ENCODE measurements at regions of chr14 and their contacts with region 1.

Region 1: GRCh38 chr14:75307700-75308379 is 29.2 kb downstream of the FOS start:
- DNase-seq: peak; percentile 75 to 81 (median 75)
- H3K4me3 ChIP-seq: peak overlapping the region in 1 of 7 experiments; percentile 16
- H3K27ac ChIP-seq: no peak overlapping the region
- H3K4me1 ChIP-seq: peaks cover 0 to 15% (median 7%) of the 10 kb centered on the region in 4 experiments
- H3K27me3 ChIP-seq: no peaks in the 10 kb centered on the region

Region 2: DNA sequence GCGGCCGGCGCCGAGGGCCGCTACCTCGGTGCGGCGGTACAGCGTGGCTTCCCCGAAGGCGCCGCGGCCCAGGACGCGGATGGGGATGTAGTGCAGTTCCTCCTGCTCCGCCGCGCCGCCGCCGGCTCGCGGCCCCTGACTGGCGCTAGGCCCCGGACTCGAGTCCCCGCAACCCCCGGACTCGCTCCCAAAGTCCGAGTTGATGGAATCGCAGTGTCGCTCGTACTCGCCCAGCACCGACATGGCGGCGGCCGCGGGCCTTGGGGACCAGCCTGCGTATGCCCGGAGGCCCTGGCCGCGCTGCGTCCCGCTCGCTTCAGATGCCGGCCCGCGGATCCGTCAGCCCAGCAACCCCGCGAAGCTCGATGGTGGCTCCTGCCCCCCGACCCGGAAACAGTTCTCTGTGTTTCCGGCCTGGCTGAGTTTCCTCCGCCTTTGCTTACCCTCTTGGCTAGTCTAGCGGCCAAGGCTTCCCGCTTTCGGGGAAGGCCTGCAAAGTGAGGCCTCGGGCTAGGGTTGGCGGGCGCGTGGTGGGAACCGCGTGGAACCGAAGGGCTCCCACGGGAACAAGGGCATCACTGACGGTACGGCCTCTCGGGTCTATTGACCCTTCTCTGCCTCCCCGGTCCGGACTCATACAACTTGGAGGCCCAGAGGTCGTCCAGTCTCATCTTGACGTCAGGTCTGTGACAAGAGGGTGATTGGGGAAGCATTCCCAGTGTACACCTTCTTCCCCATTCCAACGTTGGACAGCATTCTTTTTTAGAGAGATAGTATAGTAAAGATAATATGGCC is 181.0 kb before region 1 on chr14 and contains the start of gene NEK9:
- CTCF ChIA-PET with region 1: interaction called, 210 read pairs
- POLR2A ChIA-PET with region 1: no interaction called
- DNase-seq: peak; percentile 88 to 89 (median 89)
- H3K4me3 ChIP-seq: peak within 1 kb of the TSS; percentile 34 to 94 (median 80)
- H3K27ac ChIP-seq: peak within 1 kb of the TSS; percentile 82 to 89
- H3K4me1 ChIP-seq: peaks cover 9 to 53% (median 35%) of the 10 kb centered on the region in 4 experiments
- H3K27me3 ChIP-seq: no peaks in the 10 kb centered on the region

Region 3: GRCh38 chr14:75293920-75294642 is 13.8 kb before region 1 on chr14:
- CTCF ChIA-PET with region 1: interaction called, 12 read pairs
- POLR2A ChIA-PET with region 1: no interaction called
- DNase-seq: peak; percentile 95 to 96 (median 95)
- H3K4me3 ChIP-seq: peak overlapping the region; percentile 49 to 88 (median 74)
- H3K27ac ChIP-seq: peak overlapping the region; percentile 97 to 99
- H3K4me1 ChIP-seq: peaks cover 10 to 51% (median 37%) of the 10 kb centered on the region in 4 experiments
- H3K27me3 ChIP-seq: no peaks in the 10 kb centered on the region

Region 4: DNA sequence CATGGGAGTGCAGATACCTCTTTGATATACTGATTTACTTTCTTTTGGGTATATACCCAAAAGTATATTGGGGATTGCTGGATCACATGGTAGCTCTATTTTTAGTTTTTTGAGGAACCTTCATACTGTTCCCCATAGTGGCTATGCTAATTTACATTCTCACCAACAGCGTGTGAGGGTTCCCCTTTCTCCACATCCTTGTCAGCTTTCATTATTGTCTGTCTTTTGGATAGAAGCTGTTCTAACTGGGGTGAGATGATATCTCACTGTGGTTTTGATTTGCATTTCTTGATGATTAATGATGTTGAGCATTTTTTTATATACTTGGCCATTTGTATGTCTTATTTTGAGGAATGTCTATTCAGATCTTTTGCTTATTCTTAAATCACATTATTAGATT is 75.9 kb after region 1 on chr14:
- CTCF ChIA-PET with region 1: no interaction called
- POLR2A ChIA-PET with region 1: no interaction called
- DNase-seq: peak in 2 of 3 donors; percentile 54 to 65
- H3K4me3 ChIP-seq: no peak overlapping the region
- H3K27ac ChIP-seq: no peak overlapping the region
- H3K4me1 ChIP-seq: peaks cover 0 to 7% (median 0%) of the 10 kb centered on the region in 4 experiments
- H3K27me3 ChIP-seq: no peaks in the 10 kb centered on the region

Region 5: DNA sequence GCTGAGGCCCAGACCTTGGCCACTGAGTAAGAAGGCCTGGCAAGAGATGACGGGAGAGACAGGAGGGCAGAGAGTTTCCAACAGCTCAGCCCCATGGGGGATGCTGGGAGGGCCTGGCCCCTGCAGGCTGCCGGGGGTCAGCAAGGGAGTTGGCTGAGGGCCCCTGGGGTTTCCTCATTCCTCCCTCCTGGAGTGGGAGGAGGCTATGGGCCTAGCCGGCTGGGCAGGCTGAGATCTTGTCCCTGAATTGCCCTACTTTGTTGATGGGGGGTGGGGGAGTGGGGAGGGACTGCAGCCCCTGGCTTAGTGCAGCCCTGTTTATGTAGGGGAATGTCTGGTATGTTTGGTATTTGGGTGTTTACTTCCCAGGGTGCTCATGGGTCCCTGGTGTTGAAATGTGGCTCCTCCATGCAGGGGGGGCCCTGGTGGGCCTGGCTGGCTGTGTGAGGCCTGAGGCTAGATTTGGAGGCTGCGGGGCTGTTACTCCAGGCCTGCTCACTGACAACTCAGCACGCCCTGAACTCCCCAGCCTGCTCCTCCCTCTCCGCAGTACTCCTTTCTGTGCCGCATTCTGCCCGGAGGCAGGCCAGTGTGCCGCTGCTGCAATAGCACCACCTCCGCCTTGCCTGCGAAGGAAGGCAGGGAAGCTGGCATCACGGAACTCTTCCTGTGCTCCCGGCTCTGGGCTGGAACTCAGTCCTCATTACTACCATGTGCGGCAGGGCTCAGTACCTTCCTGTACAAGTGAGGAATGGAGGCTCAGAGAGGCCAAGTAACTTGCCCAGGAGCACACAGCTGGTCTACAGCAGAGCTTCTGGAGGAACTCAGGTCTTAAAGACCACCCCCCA is 145.3 kb after region 1 on chr14:
- CTCF ChIA-PET with region 1: interaction called, 86 read pairs
- POLR2A ChIA-PET with region 1: no interaction called
- DNase-seq: no peak
- H3K4me3 ChIP-seq: no peak overlapping the region
- H3K27ac ChIP-seq: no peak overlapping the region
- H3K4me1 ChIP-seq: peaks cover 4 to 83% (median 55%) of the 10 kb centered on the region in 4 experiments
- H3K27me3 ChIP-seq: no peaks in the 10 kb centered on the region

Region 6: GRCh38 chr14:75487155-75487671 is 179.4 kb after region 1 on chr14:
- CTCF ChIA-PET with region 1: interaction called, 63 read pairs
- POLR2A ChIA-PET with region 1: interaction called, 3 read pairs
- DNase-seq: peak in 2 of 3 donors; percentile 27 to 39
- H3K4me3 ChIP-seq: no peak overlapping the region
- H3K27ac ChIP-seq: no peak overlapping the region
- H3K4me1 ChIP-seq: no peaks in the 10 kb centered on the region
- H3K27me3 ChIP-seq: no peaks in the 10 kb centered on the region

Region 7: DNA sequence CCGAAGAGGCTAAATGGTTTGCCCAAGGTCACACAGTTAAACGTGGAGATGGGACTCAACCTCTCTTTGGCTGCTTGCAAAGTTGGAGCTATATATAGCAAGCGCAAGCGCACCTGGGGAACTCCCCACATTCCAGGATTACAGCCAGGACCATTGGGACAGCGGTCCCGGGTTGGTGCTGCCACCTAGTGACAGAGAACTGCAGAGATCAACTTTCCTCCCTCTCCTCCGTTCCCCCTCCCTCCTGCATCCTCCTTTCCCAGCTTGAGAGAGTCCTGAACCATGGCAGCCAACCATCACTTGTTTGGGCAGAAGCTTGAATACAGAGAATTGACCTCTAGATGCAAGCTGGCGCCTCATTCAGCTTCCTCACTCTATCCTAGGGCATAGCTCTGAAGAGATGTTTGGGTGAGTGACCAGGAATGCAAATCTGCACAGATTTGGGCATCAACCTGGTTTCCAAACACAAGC is 253.2 kb after region 1 on chr14:
- CTCF ChIA-PET with region 1: interaction called, 13 read pairs
- POLR2A ChIA-PET with region 1: no interaction called
- DNase-seq: peak in 2 of 3 donors; percentile 37 to 51
- H3K4me3 ChIP-seq: no peak overlapping the region
- H3K27ac ChIP-seq: no peak overlapping the region
- H3K4me1 ChIP-seq: peaks cover 2 to 25% (median 18%) of the 10 kb centered on the region in 4 experiments
- H3K27me3 ChIP-seq: no peaks in the 10 kb centered on the region